Naive thymus-derived CD4-positive, alpha-beta T cell (primary cell): ENCODE measurements at regions of chr2 and their contacts with region 1.

Region 1: GRCh38 chr2:9555297-9556141 is at the start of gene ADAM17:
- DNase-seq: peak; percentile 72 to 95 (median 80)
- ATAC-seq: peak; percentile 96
- H3K4me3 ChIP-seq: peak within 1 kb of the TSS; percentile 95
- H3K4me3 Mint-ChIP-seq: peak within 1 kb of the TSS; percentile 90 to 99 (median 96)
- H3K27ac ChIP-seq: peak within 1 kb of the TSS; percentile 97
- H3K27ac Mint-ChIP-seq: peak within 1 kb of the TSS; percentile 66 to 98 (median 96)
- H3K4me1 ChIP-seq: peaks cover 14 to 32% of the 10 kb centered on the region in 2 donors
- H3K4me1 Mint-ChIP-seq: peaks cover 35 to 63% (median 53%) of the 10 kb centered on the region in 7 donors
- H3K27me3 ChIP-seq: no peaks in the 10 kb centered on the region
- H3K27me3 Mint-ChIP-seq: no peaks in the 10 kb centered on the region
- total RNA-seq, gene ADAM17: 22.9 to 45.2 (median 25.9) TPM

Region 2: GRCh38 chr2:9474361-9474967 is 81.1 kb before region 1 on chr2 and contains the start of gene IAH1:
- CTCF ChIA-PET with region 1: no interaction called
- POLR2A ChIA-PET with region 1: interaction called, 23 read pairs
- intact Hi-C with region 1: loop called (anchors 1 kb)
- DNase-seq: peak in 8 of 9 donors; percentile 66 to 81 (median 78)
- ATAC-seq: peak; percentile 89
- H3K4me3 ChIP-seq: peak within 1 kb of the TSS; percentile 82
- H3K4me3 Mint-ChIP-seq: peak within 1 kb of the TSS; percentile 81 to 89 (median 84)
- H3K27ac ChIP-seq: peak within 1 kb of the TSS; percentile 95
- H3K27ac Mint-ChIP-seq: peak within 1 kb of the TSS; percentile 83 to 95 (median 88)
- H3K4me1 ChIP-seq: peaks cover 11 to 21% of the 10 kb centered on the region in 2 donors
- H3K4me1 Mint-ChIP-seq: peaks cover 20 to 53% (median 45%) of the 10 kb centered on the region in 7 donors
- H3K27me3 ChIP-seq: no peaks in the 10 kb centered on the region
- H3K27me3 Mint-ChIP-seq: no peaks in the 10 kb centered on the region
- total RNA-seq, gene IAH1: 43.9 to 62.7 (median 49.7) TPM

Region 3: GRCh38 chr2:9613291-9613690 is 57.8 kb after region 1 on chr2:
- CTCF ChIA-PET with region 1: no interaction called
- POLR2A ChIA-PET with region 1: interaction called, 5 read pairs
- intact Hi-C with region 1: loop called in 1 of 2 experiments (anchors 1 kb)
- DNase-seq: no peak
- ATAC-seq: no peak
- H3K4me3 ChIP-seq: no peak overlapping the region
- H3K4me3 Mint-ChIP-seq: no peak overlapping the region
- H3K27ac ChIP-seq: no peak overlapping the region
- H3K27ac Mint-ChIP-seq: no peak overlapping the region
- H3K4me1 ChIP-seq: peaks cover 12 to 30% of the 10 kb centered on the region in 2 donors
- H3K4me1 Mint-ChIP-seq: peaks cover 57 to 97% (median 89%) of the 10 kb centered on the region in 7 donors
- H3K27me3 ChIP-seq: no peaks in the 10 kb centered on the region
- H3K27me3 Mint-ChIP-seq: no peaks in the 10 kb centered on the region

Region 4: GRCh38 chr2:9782197-9782719 is 226.7 kb after region 1 on chr2:
- CTCF ChIA-PET with region 1: interaction called, 3 read pairs
- POLR2A ChIA-PET with region 1: no interaction called
- intact Hi-C with region 1: loop called (anchors 1 kb)
- DNase-seq: peak in 8 of 9 donors; percentile 32 to 75 (median 65)
- ATAC-seq: peak; percentile 86
- H3K4me3 ChIP-seq: no peak overlapping the region
- H3K4me3 Mint-ChIP-seq: peak overlapping the region in 9 of 10 donors; percentile 4 to 63 (median 31)
- H3K27ac ChIP-seq: peak overlapping the region; percentile 56
- H3K27ac Mint-ChIP-seq: peak overlapping the region; percentile 45 to 94 (median 88)
- H3K4me1 ChIP-seq: peaks cover 31 to 43% of the 10 kb centered on the region in 2 donors
- H3K4me1 Mint-ChIP-seq: peaks cover 23 to 68% (median 49%) of the 10 kb centered on the region in 7 donors
- H3K27me3 ChIP-seq: no peaks in the 10 kb centered on the region
- H3K27me3 Mint-ChIP-seq: no peaks in the 10 kb centered on the region

Region 5: DNA sequence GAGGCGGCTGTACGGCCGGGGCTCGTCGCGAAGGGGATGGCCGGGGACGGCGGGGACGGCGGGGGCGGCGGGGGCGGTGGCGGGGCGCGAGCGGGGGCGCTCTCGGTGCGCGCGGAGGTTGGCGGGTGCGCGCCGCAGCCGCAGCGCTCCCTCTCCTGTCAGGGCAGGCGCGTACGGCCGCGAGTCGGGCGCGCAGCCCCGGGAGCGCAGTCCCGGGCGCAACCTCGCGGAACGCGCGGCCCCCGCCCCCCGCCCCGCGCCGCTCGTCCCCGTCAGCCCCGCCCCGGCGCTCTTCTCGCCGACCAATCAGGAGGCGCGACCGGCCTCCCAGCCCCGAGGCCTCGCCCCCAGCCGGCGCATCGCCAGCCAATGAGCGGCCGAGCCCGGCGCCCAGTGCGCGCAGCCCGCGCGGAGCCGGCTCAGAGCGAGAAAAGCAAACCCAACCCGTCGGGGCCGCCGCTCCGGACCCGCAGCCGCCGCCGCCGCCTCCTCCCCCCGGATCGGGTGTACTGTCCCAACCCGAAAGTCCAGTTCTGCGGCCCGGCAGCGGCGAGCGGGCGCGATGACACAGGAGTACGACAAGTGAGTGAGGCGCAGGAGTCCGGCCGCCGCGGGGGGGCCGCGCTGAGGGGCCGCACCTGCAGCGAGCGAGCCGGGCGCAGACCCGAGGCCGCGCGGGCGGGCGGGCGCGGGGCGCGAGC is 395.9 kb after region 1 on chr2 and contains the start of gene GRHL1:
- CTCF ChIA-PET with region 1: no interaction called
- POLR2A ChIA-PET with region 1: no interaction called
- intact Hi-C with region 1: loop called in 1 of 2 experiments (anchors 5 kb)
- DNase-seq: peak; percentile 82 to 95 (median 90)
- ATAC-seq: peak; percentile 97
- H3K4me3 ChIP-seq: peak within 1 kb of the TSS; percentile 57
- H3K4me3 Mint-ChIP-seq: peak within 1 kb of the TSS; percentile 70 to 90 (median 86)
- H3K27ac ChIP-seq: peak within 1 kb of the TSS; percentile 63
- H3K27ac Mint-ChIP-seq: peak within 1 kb of the TSS in 7 of 9 donors; percentile 15 to 77 (median 56)
- H3K4me1 ChIP-seq: no peaks in the 10 kb centered on the region
- H3K4me1 Mint-ChIP-seq: peaks cover 0 to 13% (median 8%) of the 10 kb centered on the region in 7 donors
- H3K27me3 ChIP-seq: no peaks in the 10 kb centered on the region
- H3K27me3 Mint-ChIP-seq: peaks cover 19 to 77% (median 39%) of the 10 kb centered on the region in 5 donors
- total RNA-seq, gene GRHL1: 0.19 to 1.3 (median 0.56) TPM